Activated CD4-positive, alpha-beta T cell treated with anti-CD3 and anti-CD28 coated beads for 36 hours (primary cell): ENCODE measurements at regions of chr1 and their contacts with region 1.

Region 1: GRCh38 chr1:64553281-64553680 is 83.4 kb downstream of the CACHD1 start:
- DNase-seq: no peak
- ATAC-seq: peak; percentile 32
- H3K4me3 Mint-ChIP-seq: no peak overlapping the region
- H3K27ac Mint-ChIP-seq: no peak overlapping the region
- H3K4me1 Mint-ChIP-seq: peaks cover 39% of the 10 kb centered on the region
- H3K27me3 Mint-ChIP-seq: no peaks in the 10 kb centered on the region

Region 2: DNA sequence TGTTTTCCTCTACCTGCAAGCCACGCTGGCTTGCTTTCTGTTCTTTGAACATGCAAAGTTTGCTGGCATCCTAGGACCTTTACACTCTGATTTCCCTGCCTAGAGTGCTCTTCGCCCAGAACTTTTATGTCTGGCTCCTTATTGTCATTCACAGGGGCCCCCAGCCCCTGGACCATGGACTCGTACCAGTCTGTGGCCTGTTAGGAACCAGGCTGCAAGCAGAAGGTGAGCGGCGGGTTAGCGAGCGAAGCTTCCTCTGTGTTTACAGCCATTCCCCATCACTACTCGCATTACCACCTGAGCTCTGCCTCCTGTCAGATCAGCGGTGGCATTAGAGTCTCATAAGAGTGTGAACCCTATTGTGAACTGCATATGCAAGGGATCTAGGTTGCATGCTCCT is 1696.3 kb before region 1 on chr1:
- CTCF ChIA-PET with region 1: no interaction called
- POLR2A ChIA-PET with region 1: no interaction called
- intact Hi-C with region 1: no loop called
- DNase-seq: no peak
- ATAC-seq: no peak
- H3K4me3 Mint-ChIP-seq: no peak overlapping the region
- H3K27ac Mint-ChIP-seq: no peak overlapping the region
- H3K4me1 Mint-ChIP-seq: no peaks in the 10 kb centered on the region
- H3K27me3 Mint-ChIP-seq: no peaks in the 10 kb centered on the region

Region 3: DNA sequence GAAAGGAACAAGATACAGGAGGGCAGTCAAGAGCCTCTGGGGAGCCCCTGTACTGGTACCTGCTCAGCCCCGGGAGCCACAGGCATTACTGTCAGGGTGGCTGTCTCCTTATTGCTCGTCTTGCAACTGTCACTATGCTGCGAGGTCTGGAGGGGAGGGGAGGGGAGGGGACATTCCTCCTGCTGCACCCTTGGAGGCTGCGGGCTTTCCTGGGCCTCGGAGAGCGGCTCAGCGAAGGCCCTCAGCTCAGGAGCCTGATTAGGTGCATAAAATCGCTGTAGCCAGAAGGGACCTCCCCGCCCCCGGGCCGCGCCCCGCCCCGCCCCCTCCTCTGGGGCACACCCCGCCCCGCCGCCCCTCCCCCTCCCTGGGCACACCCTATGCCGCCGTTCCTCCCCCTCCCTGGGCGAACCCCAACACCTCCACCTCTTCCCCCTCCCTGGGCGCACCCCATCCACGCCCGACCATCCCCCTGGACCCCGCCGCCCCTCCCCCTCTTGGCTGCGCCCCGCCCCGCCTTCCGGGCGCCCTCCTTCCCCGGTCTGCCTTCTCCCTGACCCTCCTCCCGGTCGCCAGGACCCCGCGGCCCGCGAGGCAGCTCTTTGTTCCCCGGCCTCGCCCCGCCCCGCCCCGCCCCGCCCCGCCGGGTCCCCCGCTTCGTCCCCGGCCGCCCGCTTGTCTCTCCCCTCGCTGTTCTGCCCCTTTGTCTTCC is 47.9 kb before region 1 on chr1:
- CTCF ChIA-PET with region 1: no interaction called
- POLR2A ChIA-PET with region 1: no interaction called
- intact Hi-C with region 1: loop called (anchors 2 to 5 kb)
- DNase-seq: peak; percentile 83
- ATAC-seq: peak; percentile 68
- H3K4me3 Mint-ChIP-seq: peak overlapping the region; percentile 66
- H3K27ac Mint-ChIP-seq: peak overlapping the region; percentile 52
- H3K4me1 Mint-ChIP-seq: peaks cover 29% of the 10 kb centered on the region
- H3K27me3 Mint-ChIP-seq: peaks cover 13% of the 10 kb centered on the region

Region 4: GRCh38 chr1:64539781-64540218 is 13.5 kb before region 1 on chr1:
- CTCF ChIA-PET with region 1: interaction called, 4 read pairs
- POLR2A ChIA-PET with region 1: no interaction called
- intact Hi-C with region 1: loop called in 1 of 2 experiments (anchors 1 kb)
- DNase-seq: peak; percentile 17
- ATAC-seq: no peak
- H3K4me3 Mint-ChIP-seq: no peak overlapping the region
- H3K27ac Mint-ChIP-seq: peak overlapping the region; percentile 89
- H3K4me1 Mint-ChIP-seq: peaks cover 49% of the 10 kb centered on the region
- H3K27me3 Mint-ChIP-seq: no peaks in the 10 kb centered on the region

Region 5: GRCh38 chr1:64654519-64655341 is 101.4 kb after region 1 on chr1:
- CTCF ChIA-PET with region 1: no interaction called
- POLR2A ChIA-PET with region 1: no interaction called
- intact Hi-C with region 1: no loop called
- DNase-seq: no peak
- ATAC-seq: no peak
- H3K4me3 Mint-ChIP-seq: no peak overlapping the region
- H3K27ac Mint-ChIP-seq: no peak overlapping the region
- H3K4me1 Mint-ChIP-seq: no peaks in the 10 kb centered on the region
- H3K27me3 Mint-ChIP-seq: no peaks in the 10 kb centered on the region